Activated CD4-positive, alpha-beta T cell treated with anti-CD3 and anti-CD28 coated beads, Interleukin-2, amount 10 ng/mL, durations not matched to agents 7 days and 5 days (primary cell): ENCODE measurements at regions of chr7 and their contacts with region 1.

Region 1: DNA sequence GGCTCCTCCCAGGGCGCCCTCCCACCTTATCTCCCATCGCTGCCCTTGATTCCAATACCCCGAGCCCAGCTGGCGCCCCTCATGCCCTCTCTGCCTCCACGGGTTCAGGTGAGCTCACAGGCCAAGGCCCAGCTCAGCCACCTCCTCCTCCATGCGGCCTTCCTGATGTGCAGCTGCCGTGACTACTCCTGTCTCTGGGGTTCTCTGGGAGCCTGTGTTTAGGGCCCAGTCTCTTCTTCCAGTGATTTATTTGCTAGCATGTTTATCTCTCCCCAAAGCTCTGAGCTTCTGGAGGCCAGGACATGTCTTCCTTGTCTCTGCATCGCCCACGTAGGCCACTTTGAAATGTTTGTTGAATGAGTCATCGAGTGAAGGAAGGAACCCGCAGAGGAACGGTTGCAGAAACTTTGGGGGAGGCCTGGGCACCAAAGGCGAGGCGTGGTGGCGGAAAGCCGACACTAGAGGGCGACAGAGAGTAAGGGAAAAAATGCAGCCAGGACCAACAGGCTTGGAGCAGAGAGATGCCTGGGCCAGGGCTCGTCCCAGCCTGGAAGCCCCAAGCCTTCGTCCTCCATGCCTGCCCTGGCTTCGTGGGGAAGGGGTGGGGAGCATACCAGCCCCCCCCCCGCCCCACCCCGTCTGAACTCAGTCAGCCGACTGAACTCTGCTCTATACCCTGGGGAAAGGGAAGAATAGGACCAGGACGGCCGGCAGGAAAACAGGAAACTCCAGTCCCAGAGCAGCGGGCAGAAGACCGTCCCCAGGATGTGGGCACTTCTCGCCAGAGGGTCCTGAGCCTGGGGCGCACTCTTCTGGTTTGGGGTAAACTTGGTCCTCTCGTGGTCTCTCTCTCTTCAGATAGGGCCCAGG is 10.9 kb upstream of the HSPB1 start:
- DNase-seq: peak; percentile 84
- H3K4me3 Mint-ChIP-seq: no peak overlapping the region
- H3K27ac Mint-ChIP-seq: peak overlapping the region; percentile 52
- H3K4me1 Mint-ChIP-seq: peaks cover 11% of the 10 kb centered on the region
- H3K27me3 Mint-ChIP-seq: peaks cover 4% of the 10 kb centered on the region

Region 2: GRCh38 chr7:76206633-76207032 is 84.9 kb before region 1 on chr7:
- CTCF ChIA-PET with region 1: no interaction called
- POLR2A ChIA-PET with region 1: no interaction called
- DNase-seq: no peak
- H3K4me3 Mint-ChIP-seq: no peak overlapping the region
- H3K27ac Mint-ChIP-seq: no peak overlapping the region
- H3K4me1 Mint-ChIP-seq: no peaks in the 10 kb centered on the region
- H3K27me3 Mint-ChIP-seq: peaks cover 2% of the 10 kb centered on the region

Region 3: DNA sequence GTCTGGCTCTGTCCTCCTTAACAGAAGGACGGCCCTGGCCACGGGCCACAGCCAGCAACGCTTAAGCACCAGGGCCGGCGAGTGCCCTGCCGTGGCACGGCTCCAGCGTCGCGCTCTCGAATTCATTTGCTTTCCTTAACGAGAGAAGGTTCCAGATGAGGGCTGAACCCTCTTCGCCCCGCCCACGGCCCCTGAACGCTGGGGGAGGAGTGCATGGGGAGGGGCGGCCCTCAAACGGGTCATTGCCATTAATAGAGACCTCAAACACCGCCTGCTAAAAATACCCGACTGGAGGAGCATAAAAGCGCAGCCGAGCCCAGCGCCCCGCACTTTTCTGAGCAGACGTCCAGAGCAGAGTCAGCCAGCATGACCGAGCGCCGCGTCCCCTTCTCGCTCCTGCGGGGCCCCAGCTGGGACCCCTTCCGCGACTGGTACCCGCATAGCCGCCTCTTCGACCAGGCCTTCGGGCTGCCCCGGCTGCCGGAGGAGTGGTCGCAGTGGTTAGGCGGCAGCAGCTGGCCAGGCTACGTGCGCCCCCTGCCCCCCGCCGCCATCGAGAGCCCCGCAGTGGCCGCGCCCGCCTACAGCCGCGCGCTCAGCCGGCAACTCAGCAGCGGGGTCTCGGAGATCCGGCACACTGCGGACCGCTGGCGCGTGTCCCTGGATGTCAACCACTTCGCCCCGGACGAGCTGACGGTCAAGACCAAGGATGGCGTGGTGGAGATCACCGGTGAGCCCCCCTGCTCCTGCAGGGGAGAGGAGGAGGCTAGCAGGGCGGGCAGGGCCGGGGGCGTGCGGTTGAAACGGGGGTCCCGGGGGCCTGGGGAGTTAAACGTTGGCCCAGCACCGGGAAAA is 11.0 kb after region 1 on chr7 and contains the start of gene HSPB1:
- CTCF ChIA-PET with region 1: interaction called, 17 read pairs
- POLR2A ChIA-PET with region 1: no interaction called
- DNase-seq: peak; percentile 44
- H3K4me3 Mint-ChIP-seq: peak within 1 kb of the TSS; percentile 84
- H3K27ac Mint-ChIP-seq: peak within 1 kb of the TSS; percentile 85
- H3K4me1 Mint-ChIP-seq: peaks cover 19% of the 10 kb centered on the region
- H3K27me3 Mint-ChIP-seq: peaks cover 17% of the 10 kb centered on the region
- total RNA-seq, gene HSPB1: 27.0 to 28.1 TPM

Region 4: DNA sequence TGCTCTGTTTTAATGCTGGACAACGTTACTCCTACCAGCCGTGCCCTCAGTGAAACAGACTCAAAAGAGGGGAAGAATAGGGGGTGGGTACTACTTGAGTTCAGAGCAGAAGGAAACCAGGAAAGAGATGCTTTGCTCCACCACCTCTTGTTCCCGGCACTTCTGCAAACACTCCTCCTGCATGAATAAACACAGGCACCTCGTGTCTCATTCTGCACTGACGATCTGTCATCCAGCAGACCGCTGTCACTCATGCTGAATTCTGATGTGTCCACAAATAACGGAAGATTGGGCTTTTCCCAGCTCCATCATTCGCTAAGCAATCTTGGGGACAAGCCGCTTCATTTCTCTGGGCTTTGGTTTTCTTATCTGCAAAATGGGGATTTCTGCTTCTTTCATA is 40.5 kb after region 1 on chr7:
- CTCF ChIA-PET with region 1: no interaction called
- POLR2A ChIA-PET with region 1: no interaction called
- DNase-seq: no peak
- H3K4me3 Mint-ChIP-seq: no peak overlapping the region
- H3K27ac Mint-ChIP-seq: no peak overlapping the region
- H3K4me1 Mint-ChIP-seq: peaks cover 42% of the 10 kb centered on the region
- H3K27me3 Mint-ChIP-seq: no peaks in the 10 kb centered on the region